Vagina (tissue), 2 donors: ENCODE measurements at regions of chr2 and their contacts with region 1.

Region 1: DNA sequence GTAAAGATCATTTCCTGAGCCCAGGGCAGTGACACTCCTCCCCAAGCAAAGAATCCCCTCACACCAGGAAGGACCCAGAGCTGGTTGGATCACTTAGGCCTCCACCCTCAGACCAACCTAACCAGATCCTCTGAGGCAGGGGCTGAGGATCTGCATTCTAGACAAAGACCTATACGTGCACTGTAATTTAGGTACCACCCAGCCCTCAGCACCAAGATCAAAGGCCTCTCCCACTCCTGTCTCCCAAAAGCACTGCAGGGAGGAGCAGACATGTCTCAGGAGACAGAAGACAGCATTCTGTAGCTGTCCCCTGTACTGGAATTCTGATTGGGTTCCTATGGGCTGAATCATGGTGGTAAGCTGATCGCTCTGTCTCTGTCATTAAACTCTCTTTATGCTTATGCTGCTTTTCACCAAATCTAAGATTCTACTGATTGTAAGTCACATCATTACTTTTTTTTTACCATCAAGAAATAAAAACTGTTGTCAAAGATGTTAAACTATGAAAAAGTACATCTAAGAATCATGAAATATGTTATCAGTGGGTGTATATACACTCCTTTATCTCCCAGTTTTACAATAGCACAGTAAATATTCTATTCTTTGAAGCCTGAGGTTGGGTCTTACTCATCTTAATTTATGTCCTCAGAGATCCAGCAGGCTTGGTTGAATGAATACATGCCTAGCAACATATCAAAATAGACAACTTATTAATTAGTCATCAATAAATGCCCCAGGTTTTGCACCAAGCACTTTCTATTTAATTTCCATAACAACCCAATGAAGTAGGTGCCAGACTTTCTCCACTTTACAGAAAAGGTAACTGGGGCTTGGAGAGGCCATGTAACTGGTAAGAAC is 28.3 kb downstream of the MCFD2 start:
- DNase-seq: no peak
- H3K4me3 ChIP-seq: no peak overlapping the region
- H3K27ac ChIP-seq: no peak overlapping the region
- H3K4me1 ChIP-seq: peaks cover 2% of the 10 kb centered on the region
- H3K27me3 ChIP-seq: no peaks in the 10 kb centered on the region
- CTCF ChIP-seq: no peak
- POLR2A ChIP-seq: no peak

Region 2: DNA sequence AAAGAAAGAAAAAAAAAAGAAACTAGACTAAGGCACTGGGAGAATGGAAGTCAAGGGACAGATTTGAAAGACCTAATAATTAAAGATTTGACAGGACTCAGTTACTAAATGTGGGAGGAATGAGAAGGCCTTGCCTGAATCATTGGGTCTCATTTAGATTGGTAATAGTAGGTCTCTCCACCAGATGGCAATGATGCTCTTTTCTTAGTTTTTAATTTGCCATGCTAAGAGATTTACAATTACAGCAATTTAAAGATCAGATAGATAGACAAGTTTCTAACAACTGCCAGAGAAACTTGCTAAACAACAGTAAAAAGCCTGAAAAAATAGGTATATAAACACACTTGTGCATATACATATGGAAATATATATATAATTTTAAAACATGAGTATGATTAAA is 254.9 kb before region 1 on chr2:
- intact Hi-C with region 1: loop called (anchors 5 kb)
- DNase-seq: no peak
- H3K4me3 ChIP-seq: no peak overlapping the region
- H3K27ac ChIP-seq: no peak overlapping the region
- H3K4me1 ChIP-seq: no peaks in the 10 kb centered on the region
- H3K27me3 ChIP-seq: no peaks in the 10 kb centered on the region
- CTCF ChIP-seq: peak; percentile 3 to 50 (median 35)
- POLR2A ChIP-seq: no peak

Region 3: DNA sequence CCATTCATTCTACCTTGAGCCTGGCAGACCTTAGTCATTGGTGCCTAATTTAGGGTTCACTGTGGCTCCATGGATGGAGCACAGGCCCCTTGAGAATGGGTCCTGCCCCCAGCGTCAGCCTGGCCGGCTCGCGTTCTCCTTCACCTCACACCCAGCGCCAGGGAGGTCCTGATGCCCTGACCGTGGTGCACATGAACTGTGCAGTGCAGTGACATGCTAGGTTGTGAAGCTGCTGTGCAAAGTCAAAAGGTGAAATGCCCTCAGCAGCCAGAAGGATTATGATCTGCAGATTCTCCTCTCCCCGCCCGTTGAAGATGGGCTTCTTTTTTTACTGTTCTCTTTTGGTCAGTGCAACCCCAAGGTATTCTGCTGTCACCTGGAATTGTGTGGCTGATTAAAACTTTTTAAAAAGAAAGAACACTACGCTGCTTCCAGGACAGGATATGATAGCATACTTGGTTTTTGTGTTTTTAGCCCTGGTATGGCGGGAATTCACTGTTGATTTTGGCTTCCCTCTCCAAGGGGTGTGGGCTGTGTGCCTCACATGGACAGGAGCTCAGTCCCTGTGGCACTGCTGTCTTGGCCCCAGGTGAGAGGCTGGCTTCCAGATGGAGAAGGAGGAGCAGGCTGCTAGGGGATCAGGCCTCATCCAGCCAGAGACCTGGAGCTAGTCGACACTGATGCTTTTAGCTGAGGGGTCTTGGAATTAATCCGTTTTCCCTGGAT is 77.7 kb after region 1 on chr2:
- intact Hi-C with region 1: no loop called
- DNase-seq: no peak
- H3K4me3 ChIP-seq: no peak overlapping the region
- H3K27ac ChIP-seq: peak overlapping the region; percentile 59
- H3K4me1 ChIP-seq: peaks cover 72% of the 10 kb centered on the region
- H3K27me3 ChIP-seq: no peaks in the 10 kb centered on the region
- CTCF ChIP-seq: no peak
- POLR2A ChIP-seq: no peak